AG04450 (cell line): ENCODE measurements at regions of chr6 and their contacts with region 1.

Region 1: DNA sequence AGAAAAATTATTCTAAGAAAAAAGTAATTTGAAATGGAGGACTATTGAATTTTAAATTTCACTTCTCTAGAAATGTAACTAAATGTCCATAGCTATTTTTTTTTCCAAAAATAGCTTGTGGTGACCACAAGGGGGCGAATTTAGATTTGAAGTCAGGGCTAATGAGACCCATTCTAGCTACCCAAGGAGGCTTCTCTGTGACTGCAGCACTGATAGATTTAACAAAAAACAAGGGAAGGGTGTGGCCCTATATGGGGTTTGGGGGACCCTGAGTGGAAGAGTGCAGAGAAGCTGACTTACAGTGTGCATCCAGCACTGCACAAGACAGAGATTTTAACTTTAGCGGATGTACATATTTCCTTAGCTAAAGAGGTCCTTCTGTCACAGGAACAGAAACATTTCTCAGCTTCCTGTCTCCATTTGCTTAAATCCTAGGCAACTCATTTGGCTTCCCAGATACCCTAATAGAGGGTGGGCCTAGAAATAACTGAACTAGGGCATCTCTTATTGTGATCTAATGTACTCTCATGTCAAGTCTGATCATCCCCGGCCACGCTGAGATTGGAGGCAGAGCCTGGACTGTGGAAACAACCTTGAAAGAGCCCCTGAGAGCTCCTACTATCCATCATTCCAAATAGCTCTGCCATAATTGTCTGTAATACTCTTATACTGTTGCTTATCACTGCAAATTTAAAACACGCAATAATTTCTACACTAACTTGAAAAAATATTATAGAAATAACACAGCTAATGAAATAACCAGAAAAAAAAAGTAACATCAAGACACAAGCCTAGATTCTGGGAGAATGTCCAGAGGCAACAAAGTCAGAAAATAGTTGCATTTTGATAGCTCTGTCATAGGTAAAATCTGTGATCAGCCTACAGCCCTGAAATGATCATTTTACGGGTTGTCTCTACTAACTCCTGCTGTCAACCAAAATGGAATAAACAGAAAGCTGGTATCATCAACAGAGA is 93.6 kb downstream of the SNAP91 start:
- DNase-seq: peak; percentile 1
- H3K4me3 ChIP-seq: no peak overlapping the region
- H3K27ac ChIP-seq: no peak overlapping the region
- H3K27me3 ChIP-seq: no peaks in the 10 kb centered on the region
- CTCF ChIP-seq: peak; percentile 68

Region 2: DNA sequence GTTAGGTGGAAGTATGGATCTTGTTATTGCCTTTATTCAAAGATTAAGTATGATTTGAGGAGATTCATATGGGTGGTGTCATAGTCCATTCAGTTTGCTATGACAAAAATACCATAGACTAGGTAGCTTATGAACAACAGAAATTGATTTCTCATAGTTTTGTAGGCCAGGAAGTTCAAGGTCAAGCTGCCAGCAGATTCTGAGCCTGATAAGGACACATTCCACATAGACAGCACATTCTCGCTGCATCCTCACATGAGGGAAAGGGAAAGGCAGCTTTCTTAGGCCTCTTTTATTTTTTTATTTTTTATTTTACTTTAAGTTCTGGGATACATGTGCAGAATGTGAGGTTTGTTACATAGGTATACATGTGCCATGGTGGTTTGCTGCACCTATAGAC is 212.1 kb before region 1 on chr6:
- CTCF ChIA-PET with region 1: no interaction called
- POLR2A ChIA-PET with region 1: no interaction called
- DNase-seq: no peak
- H3K4me3 ChIP-seq: no peak overlapping the region
- H3K27ac ChIP-seq: no peak overlapping the region
- H3K27me3 ChIP-seq: no peaks in the 10 kb centered on the region
- CTCF ChIP-seq: no peak

Region 3: GRCh38 chr6:83601119-83601518 is 14.2 kb before region 1 on chr6:
- CTCF ChIA-PET with region 1: interaction called, 12 read pairs
- POLR2A ChIA-PET with region 1: no interaction called
- DNase-seq: no peak
- H3K4me3 ChIP-seq: no peak overlapping the region
- H3K27ac ChIP-seq: no peak overlapping the region
- H3K27me3 ChIP-seq: no peaks in the 10 kb centered on the region
- CTCF ChIP-seq: no peak

Region 4: DNA sequence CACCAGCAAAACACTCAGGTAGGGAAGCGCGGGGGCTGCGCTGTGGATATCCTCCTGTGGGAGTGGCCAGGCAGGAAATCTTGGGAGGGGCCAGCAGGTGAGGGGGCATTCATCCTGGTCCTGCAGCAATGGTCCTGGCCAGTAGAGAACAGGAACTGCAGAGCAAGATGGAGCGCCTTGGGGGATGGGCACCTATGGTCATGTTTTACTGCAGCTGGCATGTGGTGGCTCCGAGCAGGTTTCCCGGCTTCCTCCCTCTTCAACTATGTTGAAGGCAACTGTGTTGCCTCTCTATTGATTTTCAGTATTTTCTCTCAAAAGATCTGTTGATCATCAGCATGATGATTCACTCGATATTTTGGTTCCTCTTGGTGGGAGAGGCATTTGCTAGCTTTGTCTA is 22.6 kb after region 1 on chr6:
- CTCF ChIA-PET with region 1: interaction called, 10 read pairs
- POLR2A ChIA-PET with region 1: no interaction called
- DNase-seq: no peak
- H3K4me3 ChIP-seq: no peak overlapping the region
- H3K27ac ChIP-seq: no peak overlapping the region
- H3K27me3 ChIP-seq: no peaks in the 10 kb centered on the region
- CTCF ChIP-seq: no peak

Region 5: DNA sequence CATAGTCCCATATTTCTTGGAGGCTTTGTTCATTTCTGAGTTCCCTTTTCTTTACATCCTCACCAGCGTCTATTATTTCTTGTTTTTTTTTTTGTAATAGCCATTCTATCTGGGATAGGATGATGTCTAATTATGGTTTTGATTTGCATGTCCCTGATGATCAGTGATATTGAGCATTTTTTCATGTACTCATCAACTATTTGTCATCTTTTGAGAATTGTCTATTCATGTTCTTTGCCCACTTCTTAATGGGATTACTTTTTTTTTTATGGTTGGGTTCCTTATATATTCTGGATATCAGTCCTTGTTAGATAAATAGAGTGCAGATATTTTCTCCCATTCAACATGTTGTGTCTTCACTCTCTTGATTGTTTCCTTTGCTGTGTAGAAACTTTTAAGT is 286.3 kb after region 1 on chr6:
- CTCF ChIA-PET with region 1: no interaction called
- POLR2A ChIA-PET with region 1: no interaction called
- DNase-seq: no peak
- H3K4me3 ChIP-seq: no peak overlapping the region
- H3K27ac ChIP-seq: no peak overlapping the region
- H3K27me3 ChIP-seq: no peaks in the 10 kb centered on the region
- CTCF ChIP-seq: no peak

Region 6: DNA sequence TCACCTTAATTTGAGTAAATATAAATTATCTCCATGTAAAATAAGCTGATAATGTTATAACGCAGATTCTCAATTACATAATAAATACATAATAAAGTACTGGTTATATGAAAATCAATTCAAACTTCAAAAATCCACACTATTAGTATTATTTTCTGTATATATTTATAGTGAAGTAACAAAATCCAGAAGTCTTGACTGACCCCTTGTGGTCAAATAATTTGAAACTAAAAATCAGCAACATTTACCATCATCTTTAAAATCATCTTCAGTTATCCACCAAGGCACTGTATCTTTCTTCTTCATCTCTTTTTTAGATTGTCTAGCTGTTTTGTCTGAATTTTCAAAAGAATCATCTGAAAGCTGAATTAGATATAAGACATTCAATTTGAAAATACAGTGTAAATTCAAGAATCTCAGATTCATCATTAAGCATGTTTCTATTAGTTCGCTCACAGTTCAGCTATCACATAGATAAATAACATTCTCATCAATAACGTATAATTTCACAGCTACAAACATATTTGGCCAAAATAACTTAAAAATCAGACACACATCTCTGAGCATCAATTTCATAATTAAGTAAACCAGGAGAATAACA is 605.6 kb after region 1 on chr6:
- CTCF ChIA-PET with region 1: interaction called, 56 read pairs
- POLR2A ChIA-PET with region 1: interaction called, 3 read pairs
- DNase-seq: no peak
- H3K4me3 ChIP-seq: no peak overlapping the region
- H3K27ac ChIP-seq: no peak overlapping the region
- H3K27me3 ChIP-seq: no peaks in the 10 kb centered on the region
- CTCF ChIP-seq: peak; percentile 50